ENCODE measurements at regions of chr19 and their contacts with region 1.

Region 1: DNA sequence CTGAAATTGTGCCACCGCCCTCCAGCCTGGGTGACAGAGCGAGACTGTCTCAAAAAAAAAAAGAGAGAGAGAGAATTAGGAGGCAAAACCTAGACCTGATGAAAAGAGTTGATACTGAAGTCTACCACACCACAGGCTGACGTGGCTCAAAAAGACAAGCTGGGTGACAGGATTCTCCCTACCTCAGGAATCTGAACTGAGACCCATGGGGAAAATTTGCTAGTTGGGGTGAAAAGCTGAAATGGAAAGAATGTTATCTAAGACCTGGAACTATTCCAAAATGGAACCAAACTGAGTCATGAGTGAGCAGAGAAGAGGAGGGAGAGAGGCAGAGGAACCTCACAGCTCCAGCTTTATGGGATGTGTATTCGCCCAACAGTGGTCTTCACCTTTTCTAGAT is 11.7 kb downstream of the SMG9 start:
- DNase-seq: no peak
- H3K4me3 ChIP-seq: no peak overlapping the region
- H3K27ac ChIP-seq: no peak overlapping the region
- H3K27me3 ChIP-seq: no peaks in the 10 kb centered on the region
- CTCF ChIP-seq: no peak

Region 2: GRCh38 chr19:43731846-43732245 is 11.2 kb before region 1 on chr19:
- CTCF ChIA-PET with region 1: interaction called, 16 read pairs
- POLR2A ChIA-PET with region 1: no interaction called
- DNase-seq: no peak
- H3K4me3 ChIP-seq: no peak overlapping the region
- H3K27ac ChIP-seq: no peak overlapping the region
- H3K27me3 ChIP-seq: no peaks in the 10 kb centered on the region
- CTCF ChIP-seq: no peak

Region 3: GRCh38 chr19:43754503-43755255 is 11.7 kb after region 1 on chr19 and contains the start of gene SMG9:
- CTCF ChIA-PET with region 1: interaction called, 13 read pairs
- POLR2A ChIA-PET with region 1: interaction called, 3 read pairs
- DNase-seq: peak; percentile 94
- H3K4me3 ChIP-seq: peak within 1 kb of the TSS; percentile 88
- H3K27ac ChIP-seq: peak within 1 kb of the TSS; percentile 100
- H3K27me3 ChIP-seq: no peaks in the 10 kb centered on the region
- CTCF ChIP-seq: no peak
- polyA plus RNA-seq, gene SMG9: 9.2 and 12.1 TPM in 2 replicates

Region 4: DNA sequence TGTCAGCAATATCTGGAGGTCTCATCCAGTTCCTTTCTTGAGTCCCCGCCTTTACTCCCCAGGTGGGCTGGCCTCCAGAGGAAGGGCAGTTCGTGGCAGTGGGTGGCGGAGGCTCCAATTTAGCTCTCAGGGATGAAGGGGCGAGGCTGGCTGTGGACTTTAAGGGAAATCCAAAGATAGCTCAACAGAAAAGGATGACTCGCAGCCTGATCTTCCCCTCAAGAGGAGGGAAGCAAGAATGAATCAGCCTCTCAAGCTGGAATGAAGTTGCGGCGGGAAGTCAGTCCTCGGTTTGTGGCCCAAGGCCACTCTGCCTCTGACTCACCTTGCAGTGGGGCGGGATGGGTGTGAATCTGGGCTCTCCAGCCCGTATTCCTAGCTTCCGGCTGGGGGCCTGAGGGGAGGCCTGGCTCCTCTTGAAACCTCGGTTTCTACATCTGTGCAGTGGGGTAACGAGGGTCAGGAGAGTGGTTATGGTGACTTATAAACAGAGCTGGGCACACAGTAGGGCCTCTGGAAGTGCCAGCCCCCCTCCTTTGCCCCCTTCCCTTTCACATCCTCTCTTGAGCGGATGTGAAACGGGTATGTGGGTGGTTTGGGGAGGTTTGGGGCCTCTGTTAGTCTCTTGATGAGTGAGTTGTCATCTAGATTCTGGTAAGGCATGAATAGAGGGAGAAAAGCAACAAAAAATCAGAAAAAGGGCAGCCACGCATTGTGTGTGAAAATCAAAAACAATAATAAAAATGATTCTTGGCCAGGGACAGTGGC is 22.3 kb after region 1 on chr19:
- CTCF ChIA-PET with region 1: interaction called, 12 read pairs
- POLR2A ChIA-PET with region 1: interaction called, 4 read pairs
- DNase-seq: peak; percentile 81
- H3K4me3 ChIP-seq: no peak overlapping the region
- H3K27ac ChIP-seq: peak overlapping the region; percentile 89
- H3K27me3 ChIP-seq: no peaks in the 10 kb centered on the region
- CTCF ChIP-seq: no peak

Region 5: GRCh38 chr19:43784981-43785808 is 42.2 kb after region 1 on chr19:
- CTCF ChIA-PET with region 1: interaction called, 21 read pairs
- POLR2A ChIA-PET with region 1: interaction called, 4 read pairs
- DNase-seq: peak; percentile 29
- H3K4me3 ChIP-seq: no peak overlapping the region
- H3K27ac ChIP-seq: peak overlapping the region; percentile 65
- H3K27me3 ChIP-seq: no peaks in the 10 kb centered on the region
- CTCF ChIP-seq: peak; percentile 100

Region 6: DNA sequence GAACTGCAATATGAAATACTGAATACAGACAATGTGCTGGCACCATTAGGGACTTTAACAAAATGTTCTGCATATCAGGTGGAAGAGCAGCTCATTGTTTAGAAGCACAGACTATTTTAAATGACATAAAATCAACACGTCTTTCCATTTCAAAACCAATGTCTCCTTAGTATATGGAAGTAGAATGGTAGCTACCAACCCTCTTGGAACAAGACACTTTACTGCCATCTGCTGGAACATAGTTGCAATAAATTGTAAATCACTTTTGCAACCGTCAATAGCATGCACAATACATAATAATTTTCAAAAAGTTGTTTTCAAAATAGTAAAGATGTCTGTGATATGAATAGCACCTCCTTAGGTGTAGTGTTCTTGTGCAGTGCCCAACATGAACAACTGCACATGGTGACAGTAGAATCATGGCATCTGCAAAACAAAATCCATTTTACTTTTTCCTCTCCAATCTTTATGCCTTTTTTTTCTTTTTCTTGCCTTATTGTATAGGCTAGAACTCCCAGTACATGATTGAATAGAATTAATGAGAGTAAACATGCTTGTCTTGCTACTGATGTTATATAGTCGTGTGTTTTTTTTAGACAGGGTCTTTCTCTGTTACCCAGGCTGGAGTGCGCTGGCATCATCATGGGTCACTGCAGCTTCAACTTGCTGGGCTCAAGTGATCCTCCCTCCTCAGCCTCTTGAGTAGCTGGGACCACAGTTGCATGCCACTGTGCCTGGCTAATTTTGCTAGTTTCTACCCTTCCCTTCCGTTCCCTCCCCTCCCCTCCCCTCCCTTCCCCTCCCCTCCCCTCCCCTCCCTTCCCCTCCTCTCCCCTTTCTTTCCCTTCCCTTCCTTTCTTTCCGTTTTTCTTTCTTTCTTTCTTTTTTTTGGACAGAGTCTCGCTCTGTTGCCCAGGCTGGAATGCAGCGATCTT is 67.0 kb after region 1 on chr19:
- CTCF ChIA-PET with region 1: interaction called, 38 read pairs
- POLR2A ChIA-PET with region 1: no interaction called
- DNase-seq: peak; percentile 32
- H3K4me3 ChIP-seq: no peak overlapping the region
- H3K27ac ChIP-seq: no peak overlapping the region
- H3K27me3 ChIP-seq: peaks cover 4% of the 10 kb centered on the region
- CTCF ChIP-seq: peak; percentile 64

Region 7: GRCh38 chr19:43842007-43842406 is 99.0 kb after region 1 on chr19:
- CTCF ChIA-PET with region 1: no interaction called
- POLR2A ChIA-PET with region 1: no interaction called
- DNase-seq: no peak
- H3K4me3 ChIP-seq: no peak overlapping the region
- H3K27ac ChIP-seq: no peak overlapping the region
- H3K27me3 ChIP-seq: no peaks in the 10 kb centered on the region
- CTCF ChIP-seq: no peak

Region 8: GRCh38 chr19:43901395-43902390 is 158.7 kb after region 1 on chr19:
- CTCF ChIA-PET with region 1: no interaction called
- POLR2A ChIA-PET with region 1: no interaction called
- DNase-seq: peak; percentile 66
- H3K4me3 ChIP-seq: peak overlapping the region; percentile 77
- H3K27ac ChIP-seq: no peak overlapping the region
- H3K27me3 ChIP-seq: no peaks in the 10 kb centered on the region
- CTCF ChIP-seq: no peak

Measured in AG04450 (cell line).